ENCODE measurements at regions of chr19 and their contacts with region 1.

Region 1: GRCh38 chr19:18152444-18152816 is 533 bp upstream of the PIK3R2 start:
- DNase-seq: peak; percentile 99
- H3K4me3 Mint-ChIP-seq: peak overlapping the region; percentile 66
- H3K27ac Mint-ChIP-seq: peak overlapping the region; percentile 97
- H3K4me1 Mint-ChIP-seq: peaks cover 22% of the 10 kb centered on the region
- H3K27me3 Mint-ChIP-seq: no peaks in the 10 kb centered on the region

Region 2: GRCh38 chr19:17947815-17948513 is 204.5 kb before region 1 on chr19:
- CTCF ChIA-PET with region 1: no interaction called
- POLR2A ChIA-PET with region 1: no interaction called
- intact Hi-C with region 1: loop called (anchors 5 kb)
- DNase-seq: peak; percentile 96
- H3K4me3 Mint-ChIP-seq: peak overlapping the region; percentile 52
- H3K27ac Mint-ChIP-seq: peak overlapping the region; percentile 86
- H3K4me1 Mint-ChIP-seq: peaks cover 45% of the 10 kb centered on the region
- H3K27me3 Mint-ChIP-seq: peaks cover 38% of the 10 kb centered on the region

Region 3: GRCh38 chr19:18097217-18097992 is 55.0 kb before region 1 on chr19 and contains the start of gene MAST3:
- CTCF ChIA-PET with region 1: no interaction called
- POLR2A ChIA-PET with region 1: interaction called, 4 read pairs
- intact Hi-C with region 1: loop called (anchors 5 kb)
- DNase-seq: peak; percentile 95
- H3K4me3 Mint-ChIP-seq: peak within 1 kb of the TSS; percentile 83
- H3K27ac Mint-ChIP-seq: peak within 1 kb of the TSS; percentile 58
- H3K4me1 Mint-ChIP-seq: peaks cover 24% of the 10 kb centered on the region
- H3K27me3 Mint-ChIP-seq: no peaks in the 10 kb centered on the region
- total RNA-seq, gene MAST3: 22.5 to 23.8 TPM

Region 4: DNA sequence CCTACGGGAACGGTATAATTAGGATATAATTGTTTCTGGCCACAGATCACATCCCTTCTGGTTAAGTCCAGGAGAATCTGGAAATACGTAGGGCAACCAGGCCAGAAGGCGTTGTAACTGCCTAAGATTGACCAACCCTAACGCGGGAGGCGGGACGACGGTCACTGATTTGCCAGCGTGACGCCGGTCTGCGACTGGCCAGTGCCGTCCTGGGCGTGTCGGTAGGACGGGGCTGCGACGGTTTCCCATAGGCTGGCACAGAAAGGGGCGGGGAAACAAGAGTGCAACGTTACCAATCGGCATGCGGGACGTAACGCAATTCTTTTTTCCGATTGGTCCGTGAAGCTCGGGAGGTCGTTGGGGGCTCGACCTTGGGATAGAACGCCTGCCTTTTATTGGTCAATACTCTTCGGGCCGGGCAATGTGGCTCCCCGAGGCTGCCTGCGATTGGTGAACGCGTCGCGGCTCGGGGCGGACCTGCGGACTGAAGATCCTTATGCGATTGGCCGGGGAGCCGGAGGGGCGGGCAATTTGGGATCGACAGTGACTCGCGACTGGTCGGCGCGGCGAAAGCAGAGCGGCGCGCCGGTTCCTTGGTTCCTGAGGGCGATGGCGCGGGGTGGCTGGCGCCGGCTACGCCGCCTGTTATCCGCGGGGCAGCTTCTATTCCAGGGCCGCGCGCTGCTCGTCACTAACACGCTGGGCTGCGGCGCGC is 40.4 kb after region 1 on chr19 and contains the start of gene MPV17L2:
- CTCF ChIA-PET with region 1: interaction called, 4 read pairs
- POLR2A ChIA-PET with region 1: no interaction called
- intact Hi-C with region 1: loop called (anchors 1 kb)
- DNase-seq: peak; percentile 99
- H3K4me3 Mint-ChIP-seq: peak within 1 kb of the TSS; percentile 86
- H3K27ac Mint-ChIP-seq: peak within 1 kb of the TSS; percentile 87
- H3K4me1 Mint-ChIP-seq: peaks cover 21% of the 10 kb centered on the region
- H3K27me3 Mint-ChIP-seq: no peaks in the 10 kb centered on the region
- total RNA-seq, gene MPV17L2: 6.4 to 7.3 TPM